HEK293 (cell line): ENCODE measurements at regions of chr2 and their contacts with region 1.

Region 1: DNA sequence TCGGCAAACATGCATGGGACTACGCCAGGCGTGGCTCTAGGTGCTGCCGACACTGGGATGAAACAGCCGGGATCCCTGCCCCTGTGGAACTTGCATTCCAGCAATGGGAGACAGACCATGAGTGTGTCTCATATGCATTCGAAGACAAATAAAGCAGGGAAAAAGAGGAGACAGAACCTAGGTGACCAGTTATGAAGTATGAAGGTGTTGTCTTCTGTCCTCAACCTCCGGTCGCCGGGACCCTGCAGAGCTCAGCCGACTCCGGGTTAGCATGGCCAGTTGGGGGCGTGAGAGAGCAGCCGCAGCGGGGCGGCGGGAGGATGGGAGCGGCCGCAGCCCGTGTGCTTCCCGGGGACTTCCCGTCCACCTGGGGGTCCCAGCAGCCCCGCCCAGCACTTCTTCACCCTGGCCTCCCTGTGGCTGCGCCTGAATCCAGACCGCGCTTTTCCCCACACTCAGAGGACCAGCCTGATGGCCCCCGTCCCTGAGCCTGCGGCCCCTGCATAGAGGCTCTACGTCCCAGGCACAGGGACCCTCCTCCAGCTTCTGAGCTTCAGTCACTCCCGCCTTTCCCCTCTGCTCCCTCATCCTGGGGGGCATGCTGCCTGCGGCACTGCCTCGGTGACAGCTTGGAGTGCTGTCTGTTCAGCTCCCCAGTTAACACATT is 11.4 kb downstream of the ID2 start:
- H3K4me3 ChIP-seq: peak overlapping the region; percentile 18; the same call in 1 of the 2 replicates
- H3K27ac ChIP-seq: no peak overlapping the region
- H3K4me1 ChIP-seq: no peaks in the 10 kb centered on the region; the same call in 1 of the 2 replicates
- CTCF ChIP-seq: peak; percentile 68

Region 2: DNA sequence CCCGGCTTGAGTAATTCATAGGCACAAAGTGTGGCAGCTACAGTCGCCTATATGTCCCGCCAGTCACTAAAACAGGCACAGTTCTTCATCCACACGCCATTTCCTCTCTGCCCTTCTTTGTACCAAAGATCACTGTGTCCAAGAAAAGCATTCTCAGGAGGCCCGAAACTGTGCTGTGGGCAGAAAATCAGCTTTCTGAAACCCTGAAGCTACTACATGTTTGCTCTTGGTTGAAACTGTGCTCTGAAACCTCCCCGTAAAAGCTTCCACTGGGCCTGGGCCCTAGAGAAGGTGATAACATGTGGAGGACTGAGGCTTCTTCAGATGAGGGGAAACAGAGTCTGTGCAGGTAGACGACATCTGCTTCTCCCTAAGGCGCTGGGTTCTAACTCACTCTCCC is 87.1 kb before region 1 on chr2:
- CTCF ChIA-PET with region 1: no interaction called
- POLR2A ChIA-PET with region 1: no interaction called
- H3K4me3 ChIP-seq: no peak overlapping the region
- H3K27ac ChIP-seq: no peak overlapping the region
- H3K4me1 ChIP-seq: no peaks in the 10 kb centered on the region
- CTCF ChIP-seq: no peak

Region 3: DNA sequence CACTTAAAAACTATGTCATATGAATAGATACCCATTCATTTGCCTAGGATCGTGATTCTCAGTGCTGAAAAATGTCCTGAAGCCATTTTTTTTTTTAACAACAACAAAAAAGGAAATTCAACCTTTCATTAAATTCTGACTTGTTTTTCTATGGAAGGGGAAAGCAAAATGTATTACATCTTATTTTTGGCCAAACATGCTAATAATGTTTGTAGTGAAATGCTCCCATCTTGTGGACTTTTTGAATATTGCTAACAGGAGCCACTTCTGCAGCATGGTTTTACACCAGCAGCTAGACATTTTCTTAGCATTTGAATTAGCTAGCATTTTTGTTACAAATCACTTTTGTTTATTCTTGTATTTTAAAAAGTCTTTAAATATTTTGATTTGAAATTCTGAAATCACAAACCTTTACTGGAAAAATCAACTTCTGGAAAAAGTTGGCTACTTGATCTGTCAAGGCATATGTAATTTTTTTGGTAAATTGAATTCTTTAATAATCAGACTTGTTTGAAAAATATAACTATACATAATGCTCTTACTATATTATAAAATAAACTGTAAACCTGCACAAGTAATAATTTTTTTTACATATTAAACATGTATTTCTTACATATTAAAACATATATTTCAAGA is 68.4 kb after region 1 on chr2:
- CTCF ChIA-PET with region 1: interaction called, 11 read pairs
- POLR2A ChIA-PET with region 1: no interaction called
- H3K4me3 ChIP-seq: no peak overlapping the region
- H3K27ac ChIP-seq: no peak overlapping the region
- H3K4me1 ChIP-seq: no peaks in the 10 kb centered on the region
- CTCF ChIP-seq: no peak